BJ (cell line): ENCODE measurements at regions of chr19 and their contacts with region 1.

Region 1: DNA sequence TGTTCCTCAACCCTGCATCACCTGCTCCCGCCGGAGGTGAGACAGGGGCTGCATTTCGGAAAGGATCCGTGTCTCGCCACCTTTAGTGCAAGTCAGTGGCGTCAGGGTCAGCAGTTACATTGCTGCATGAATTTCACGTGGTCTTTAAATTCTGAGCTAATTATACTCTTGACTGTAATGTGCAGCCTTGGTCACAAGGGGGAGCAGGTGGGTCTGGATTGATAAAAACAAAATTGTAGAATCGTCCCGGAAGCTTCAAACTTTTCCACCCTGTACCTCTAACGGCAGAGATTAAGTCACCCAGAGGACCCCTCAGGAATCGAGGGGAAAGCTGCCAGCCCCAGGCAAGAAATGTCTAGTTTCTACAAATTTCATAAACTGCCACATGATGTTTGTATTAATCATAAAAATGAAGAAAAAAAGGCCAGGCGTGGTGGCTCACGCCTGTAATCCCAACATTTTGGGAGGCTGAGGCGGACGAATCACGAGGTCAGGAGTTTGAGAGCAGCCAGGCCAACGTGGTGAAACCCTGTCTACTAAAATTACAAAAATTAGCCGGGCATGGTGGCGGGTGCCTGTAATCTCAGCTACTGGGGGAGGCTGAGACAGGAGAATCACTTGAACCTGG is 20.2 kb downstream of the BBC3 start:
- DNase-seq: peak; percentile 50
- H3K4me3 ChIP-seq: no peak overlapping the region
- H3K27me3 ChIP-seq: no peaks in the 10 kb centered on the region
- CTCF ChIP-seq: peak; percentile 78

Region 2: GRCh38 chr19:46990991-46991676 is 219.7 kb before region 1 on chr19:
- CTCF ChIA-PET with region 1: no interaction called
- POLR2A ChIA-PET with region 1: no interaction called
- DNase-seq: no peak
- H3K4me3 ChIP-seq: no peak overlapping the region
- H3K27me3 ChIP-seq: no peaks in the 10 kb centered on the region
- CTCF ChIP-seq: peak; percentile 86

Region 3: DNA sequence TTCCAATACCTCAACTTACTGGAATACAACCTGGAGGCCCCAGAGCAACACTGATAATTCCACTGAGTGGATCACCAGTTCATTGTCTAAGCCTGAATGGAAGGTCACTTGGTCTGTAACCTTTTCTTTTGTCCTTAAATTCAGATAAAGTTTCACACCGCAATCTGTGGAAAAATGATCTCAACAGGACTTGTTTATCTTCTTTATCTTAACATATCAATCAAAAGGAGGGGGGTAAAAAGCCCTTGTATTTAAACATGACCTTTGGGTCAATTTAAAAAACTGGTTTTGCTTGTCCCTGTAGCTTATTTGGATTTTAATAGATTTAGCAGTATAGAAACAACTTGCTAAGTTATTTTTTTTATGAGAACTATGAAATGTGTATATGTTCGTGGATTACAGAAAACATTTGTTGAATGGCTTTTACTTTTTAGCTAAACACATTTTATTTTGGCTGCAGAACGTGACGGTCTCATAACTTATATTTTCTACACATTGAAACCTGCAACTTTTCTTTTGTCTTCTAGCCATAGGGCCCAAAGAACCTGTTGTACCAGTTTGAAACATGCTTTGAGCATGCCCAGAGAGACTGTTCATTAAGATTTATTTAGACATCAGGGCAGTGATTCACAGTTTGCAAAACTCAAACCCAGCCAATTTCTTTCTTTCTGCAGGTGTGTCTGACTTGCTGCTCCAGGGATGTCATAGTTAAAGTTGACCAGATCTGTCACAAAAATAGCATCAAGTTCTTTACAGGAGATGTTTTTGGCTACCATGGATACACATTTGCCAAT is 58.4 kb before region 1 on chr19:
- CTCF ChIA-PET with region 1: interaction called, 19 read pairs
- POLR2A ChIA-PET with region 1: no interaction called
- DNase-seq: no peak
- H3K4me3 ChIP-seq: no peak overlapping the region
- H3K27me3 ChIP-seq: no peaks in the 10 kb centered on the region
- CTCF ChIP-seq: no peak

Region 4: GRCh38 chr19:47176627-47177090 is 34.1 kb before region 1 on chr19:
- CTCF ChIA-PET with region 1: interaction called, 10 read pairs
- POLR2A ChIA-PET with region 1: no interaction called
- DNase-seq: peak; percentile 93
- H3K4me3 ChIP-seq: no peak overlapping the region
- H3K27me3 ChIP-seq: no peaks in the 10 kb centered on the region
- CTCF ChIP-seq: no peak

Region 5: DNA sequence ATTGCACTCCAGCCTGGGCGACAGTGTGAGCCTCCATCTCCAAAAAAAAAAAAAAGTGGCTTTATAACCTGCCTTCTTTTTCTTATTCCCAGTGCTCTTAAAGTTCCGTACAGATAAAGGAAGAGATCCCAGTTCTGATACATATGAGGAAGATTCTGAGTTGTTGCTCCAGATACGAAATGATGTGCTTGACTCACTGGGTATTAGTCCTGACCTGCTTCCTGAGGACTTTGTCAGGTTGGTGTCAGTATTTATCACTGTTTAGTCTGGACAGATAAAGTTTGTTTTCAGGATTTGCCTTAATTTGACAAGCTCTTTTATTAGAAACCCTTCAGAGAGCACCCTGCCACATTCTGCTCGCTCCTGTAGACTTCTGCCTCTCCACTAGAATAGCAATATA is 13.7 kb before region 1 on chr19:
- CTCF ChIA-PET with region 1: interaction called, 35 read pairs
- POLR2A ChIA-PET with region 1: no interaction called
- DNase-seq: no peak
- H3K4me3 ChIP-seq: no peak overlapping the region
- H3K27me3 ChIP-seq: no peaks in the 10 kb centered on the region
- CTCF ChIP-seq: no peak

Region 6: DNA sequence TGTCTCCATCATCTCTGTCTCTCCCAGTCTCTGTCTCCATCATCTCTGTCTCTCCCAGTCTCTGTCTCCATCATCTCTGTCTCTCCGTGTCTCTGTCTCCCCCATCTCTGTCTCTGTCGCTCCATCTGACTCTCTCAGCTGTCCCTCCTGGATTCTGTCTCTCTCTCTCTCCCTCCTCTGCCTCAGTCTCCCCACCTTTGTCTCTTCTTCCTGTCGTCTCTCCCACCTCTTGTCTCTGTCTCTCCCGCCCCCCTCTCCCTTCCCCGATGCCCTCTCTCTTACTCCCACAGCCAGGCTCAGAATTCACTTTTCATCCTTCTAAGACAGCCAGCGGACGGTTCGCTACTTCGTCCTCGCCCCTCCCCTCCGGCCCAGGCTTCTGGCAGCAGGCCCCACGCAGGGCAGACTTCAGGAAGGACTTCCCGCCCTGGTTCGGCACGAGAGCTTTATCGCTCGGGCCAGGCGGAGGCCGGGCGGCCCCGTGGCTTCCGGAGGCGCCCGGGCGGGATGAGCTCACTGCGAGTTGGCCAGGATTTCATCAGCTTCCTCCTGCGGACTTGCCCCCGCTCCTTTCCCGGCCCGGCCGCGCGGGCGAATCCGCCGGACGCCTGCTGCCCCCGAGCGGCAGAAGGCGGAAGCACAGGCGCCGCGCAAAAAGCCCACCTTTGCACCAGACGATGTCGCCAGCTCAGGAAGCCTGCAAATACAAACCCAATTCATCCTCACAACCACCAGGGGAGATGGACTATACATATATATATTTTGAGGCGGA is 33.2 kb after region 1 on chr19:
- CTCF ChIA-PET with region 1: interaction called, 229 read pairs
- POLR2A ChIA-PET with region 1: interaction called, 13 read pairs
- DNase-seq: peak; percentile 80
- H3K4me3 ChIP-seq: peak overlapping the region; percentile 55
- H3K27me3 ChIP-seq: no peaks in the 10 kb centered on the region
- CTCF ChIP-seq: peak; percentile 93

Region 7: DNA sequence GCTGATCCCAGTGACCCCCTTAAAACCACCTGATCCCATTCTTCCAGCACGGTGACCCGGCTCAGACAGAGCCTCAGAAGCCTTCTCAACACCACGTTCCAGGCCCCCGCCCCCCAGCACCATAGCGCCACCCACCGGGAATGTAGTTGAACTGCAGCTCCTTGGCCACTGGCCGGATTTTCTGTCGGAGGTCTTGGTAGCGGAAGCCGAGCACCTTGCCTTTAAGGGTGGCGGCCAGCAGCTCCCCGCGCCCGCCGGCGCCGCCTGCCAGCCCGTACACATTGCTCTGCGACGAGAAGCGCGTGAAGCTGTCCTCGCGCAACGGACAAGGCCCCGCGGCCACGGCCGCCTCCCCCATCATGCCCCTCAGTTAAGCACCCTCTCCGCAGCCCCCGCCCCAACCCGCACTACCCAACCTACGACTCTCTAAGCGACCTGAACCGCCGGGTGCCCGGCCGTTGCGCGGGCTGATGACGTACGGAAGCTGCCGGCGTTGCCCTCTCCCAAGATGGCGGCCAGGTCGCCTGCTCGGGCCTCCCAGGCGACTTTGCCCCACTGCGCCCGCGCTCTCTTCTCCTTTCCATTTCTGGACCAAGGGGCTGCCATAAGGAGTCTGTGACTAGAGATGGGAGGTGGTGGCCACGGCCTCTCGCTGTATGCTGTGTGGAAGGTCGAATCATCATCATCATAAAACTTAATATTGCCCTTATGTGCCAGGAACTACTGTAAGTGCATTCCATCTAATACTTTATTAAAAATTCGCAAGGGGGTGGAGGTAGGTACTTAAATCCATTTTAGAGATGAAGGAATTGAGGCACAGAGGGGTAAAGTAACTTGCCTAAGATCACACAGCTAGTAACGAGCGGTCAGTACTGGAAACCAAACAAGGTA is 273.2 kb after region 1 on chr19 and contains the start of gene KPTN:
- CTCF ChIA-PET with region 1: no interaction called
- POLR2A ChIA-PET with region 1: no interaction called
- DNase-seq: peak; percentile 33
- H3K4me3 ChIP-seq: peak within 1 kb of the TSS; percentile 90
- H3K27me3 ChIP-seq: no peaks in the 10 kb centered on the region
- CTCF ChIP-seq: peak; percentile 98
- polyA plus RNA-seq, gene KPTN: 7.0 and 12.1 TPM in 2 replicates